ENCODE measurements at regions of chr10 and their contacts with region 1.

Region 1: GRCh38 chr10:110007701-110008517 is at the start of gene ADD3:
- DNase-seq: peak; percentile 81
- H3K4me3 Mint-ChIP-seq: peak within 1 kb of the TSS; percentile 93
- H3K27ac Mint-ChIP-seq: peak within 1 kb of the TSS; percentile 81
- H3K4me1 Mint-ChIP-seq: peaks cover 47% of the 10 kb centered on the region
- H3K27me3 Mint-ChIP-seq: peaks cover 2% of the 10 kb centered on the region
- total RNA-seq, gene ADD3: 30.1 and 36.6 TPM in 2 replicates

Region 2: GRCh38 chr10:108872854-108873253 is 1135.1 kb before region 1 on chr10:
- intact Hi-C with region 1: no loop called
- DNase-seq: no peak
- H3K4me3 Mint-ChIP-seq: no peak overlapping the region
- H3K27ac Mint-ChIP-seq: no peak overlapping the region
- H3K4me1 Mint-ChIP-seq: no peaks in the 10 kb centered on the region
- H3K27me3 Mint-ChIP-seq: no peaks in the 10 kb centered on the region

Region 3: DNA sequence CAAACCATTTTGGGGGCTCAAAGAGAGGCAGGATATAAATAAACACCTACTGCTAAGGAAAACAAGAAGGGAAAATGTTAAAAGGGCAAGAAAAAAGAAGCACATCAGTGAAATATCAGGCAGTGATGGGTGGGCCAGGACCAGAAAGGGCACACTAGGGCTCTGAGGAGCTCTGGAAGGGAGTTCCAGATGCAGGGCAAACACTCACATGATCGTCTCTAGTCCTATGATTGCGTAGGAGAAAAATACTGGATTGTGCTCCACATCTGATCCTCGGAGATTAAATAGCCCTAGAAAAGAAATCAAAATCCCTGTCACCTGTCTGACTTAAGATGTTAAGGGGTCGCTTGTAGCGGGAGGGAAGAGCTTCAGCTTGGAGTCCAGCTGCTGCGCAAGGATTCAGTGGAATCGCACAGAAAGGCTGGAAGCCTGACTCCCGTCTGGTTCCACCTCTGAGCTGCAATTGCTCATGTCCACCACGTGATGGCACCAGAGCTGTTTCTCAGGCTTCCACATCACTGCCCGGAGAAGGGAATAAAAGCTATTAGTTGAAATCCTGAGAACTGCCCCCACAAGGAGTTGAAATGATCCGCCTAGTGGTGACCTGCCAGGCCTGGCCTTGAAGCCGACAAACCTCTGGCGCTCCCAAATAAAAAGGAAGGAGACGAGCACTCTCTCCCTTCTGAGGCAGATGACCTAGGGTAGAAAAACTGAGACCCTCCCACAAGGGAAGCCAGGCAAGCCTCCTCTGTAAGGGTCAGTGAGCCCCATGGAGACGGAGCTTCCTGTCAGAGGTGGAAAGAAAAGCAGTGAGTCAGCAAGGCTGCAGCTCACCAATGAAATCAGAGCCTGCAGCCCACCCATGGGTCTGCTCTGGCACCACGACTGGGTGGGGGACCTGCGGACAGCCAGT is 123.8 kb before region 1 on chr10:
- intact Hi-C with region 1: loop called (anchors 1 kb)
- DNase-seq: peak; percentile 31
- H3K4me3 Mint-ChIP-seq: no peak overlapping the region
- H3K27ac Mint-ChIP-seq: no peak overlapping the region
- H3K4me1 Mint-ChIP-seq: peaks cover 21% of the 10 kb centered on the region
- H3K27me3 Mint-ChIP-seq: no peaks in the 10 kb centered on the region

Region 4: GRCh38 chr10:109978481-109978880 is 29.4 kb before region 1 on chr10:
- intact Hi-C with region 1: loop called (anchors 1 kb)
- DNase-seq: peak; percentile 26
- H3K4me3 Mint-ChIP-seq: no peak overlapping the region
- H3K27ac Mint-ChIP-seq: no peak overlapping the region
- H3K4me1 Mint-ChIP-seq: peaks cover 8% of the 10 kb centered on the region
- H3K27me3 Mint-ChIP-seq: peaks cover 7% of the 10 kb centered on the region

Region 5: DNA sequence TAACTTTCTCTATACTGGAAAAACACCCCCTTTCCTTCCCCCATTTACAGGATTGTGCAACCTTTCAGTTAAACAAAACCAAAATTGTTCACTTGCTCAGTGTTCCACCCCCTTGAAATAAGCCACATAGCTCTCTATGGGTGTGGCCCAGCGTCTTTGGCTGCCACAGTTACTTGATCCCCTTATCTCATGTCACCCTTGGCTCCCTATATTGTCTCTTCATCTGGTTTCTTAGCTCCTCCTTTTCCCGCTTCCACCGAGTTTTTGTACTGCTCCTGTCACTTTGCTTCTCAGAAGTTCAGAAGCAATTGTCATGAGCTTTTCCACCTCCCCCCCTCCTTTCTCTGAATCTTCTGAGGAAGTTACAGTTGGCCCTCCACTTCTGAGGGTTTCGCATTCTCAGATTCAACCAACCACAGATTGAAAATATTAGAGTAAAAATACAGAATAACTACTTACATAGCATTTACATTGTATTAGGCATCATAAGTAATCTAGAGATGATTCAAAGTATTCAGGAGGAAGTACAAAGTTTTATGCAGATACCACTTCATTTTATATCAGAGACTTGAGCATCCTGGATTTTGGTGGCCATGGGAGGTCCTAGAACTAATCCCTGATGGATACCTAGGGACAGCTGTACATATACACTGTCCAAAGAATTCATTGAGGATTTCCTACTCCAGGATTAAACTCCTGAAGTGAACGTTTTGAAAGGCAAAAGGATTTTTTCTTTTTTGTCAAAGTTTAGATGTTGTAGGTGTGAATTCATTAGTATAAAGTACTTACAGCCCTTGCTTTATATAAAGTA is 60.3 kb after region 1 on chr10:
- intact Hi-C with region 1: loop called (anchors 1 kb)
- DNase-seq: peak; percentile 60
- H3K4me3 Mint-ChIP-seq: peak overlapping the region; percentile 80
- H3K27ac Mint-ChIP-seq: peak overlapping the region; percentile 96
- H3K4me1 Mint-ChIP-seq: peaks cover 93% of the 10 kb centered on the region
- H3K27me3 Mint-ChIP-seq: no peaks in the 10 kb centered on the region

Region 6: GRCh38 chr10:110101464-110102144 is 93.7 kb after region 1 on chr10:
- intact Hi-C with region 1: loop called (anchors 1 kb)
- DNase-seq: no peak
- H3K4me3 Mint-ChIP-seq: no peak overlapping the region
- H3K27ac Mint-ChIP-seq: peak overlapping the region; percentile 89
- H3K4me1 Mint-ChIP-seq: peaks cover 50% of the 10 kb centered on the region
- H3K27me3 Mint-ChIP-seq: no peaks in the 10 kb centered on the region

Region 7: GRCh38 chr10:110304780-110305421 is 297.0 kb after region 1 on chr10 and contains the start of gene SMNDC1:
- intact Hi-C with region 1: loop called (anchors 5 kb)
- DNase-seq: peak; percentile 96
- H3K4me3 Mint-ChIP-seq: peak within 1 kb of the TSS; percentile 97
- H3K27ac Mint-ChIP-seq: peak within 1 kb of the TSS; percentile 96
- H3K4me1 Mint-ChIP-seq: peaks cover 48% of the 10 kb centered on the region
- H3K27me3 Mint-ChIP-seq: no peaks in the 10 kb centered on the region
- total RNA-seq, gene SMNDC1: 47.8 and 48.0 TPM in 2 replicates

Region 8: GRCh38 chr10:110864662-110865140 is 856.8 kb after region 1 on chr10:
- intact Hi-C with region 1: loop called (anchors 10 kb)
- DNase-seq: peak; percentile 69
- H3K4me3 Mint-ChIP-seq: peak overlapping the region; percentile 75
- H3K27ac Mint-ChIP-seq: peak overlapping the region; percentile 95
- H3K4me1 Mint-ChIP-seq: peaks cover 96% of the 10 kb centered on the region
- H3K27me3 Mint-ChIP-seq: no peaks in the 10 kb centered on the region